ENCODE measurements at regions of chr13 and their contacts with region 1.

Region 1: GRCh38 chr13:49840266-49840665 is 47.8 kb upstream of the KPNA3 start:
- DNase-seq: no peak
- ATAC-seq: no peak
- H3K4me3 Mint-ChIP-seq: no peak overlapping the region
- H3K27ac Mint-ChIP-seq: no peak overlapping the region
- H3K4me1 Mint-ChIP-seq: no peaks in the 10 kb centered on the region
- H3K27me3 Mint-ChIP-seq: no peaks in the 10 kb centered on the region
- CTCF ChIP-seq: no peak

Region 2: DNA sequence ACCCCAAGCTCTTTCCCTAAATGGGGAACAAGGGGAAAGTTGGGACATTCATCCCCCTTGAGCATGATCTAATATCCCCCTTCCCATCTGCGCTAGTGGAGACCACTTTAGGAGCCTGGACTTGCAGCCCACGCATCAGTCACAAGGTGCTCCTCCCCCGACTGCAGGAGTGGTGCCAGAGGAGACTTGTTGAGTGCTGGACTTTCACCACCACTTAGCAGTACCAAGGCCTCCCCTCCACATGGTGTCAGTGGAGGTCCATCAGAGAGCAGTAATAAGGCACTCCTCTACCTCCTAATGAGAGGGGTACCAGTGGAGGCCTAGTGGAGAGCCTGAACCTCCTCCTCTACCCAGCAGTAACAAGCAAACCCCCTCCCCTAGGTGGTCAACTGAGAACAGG is 418.9 kb before region 1 on chr13:
- CTCF ChIA-PET with region 1: no interaction called
- POLR2A ChIA-PET with region 1: no interaction called
- intact Hi-C with region 1: loop called (anchors 5 kb)
- DNase-seq: no peak
- ATAC-seq: peak; percentile 56
- H3K4me3 Mint-ChIP-seq: no peak overlapping the region
- H3K27ac Mint-ChIP-seq: no peak overlapping the region
- H3K4me1 Mint-ChIP-seq: peaks cover 6% of the 10 kb centered on the region
- H3K27me3 Mint-ChIP-seq: no peaks in the 10 kb centered on the region
- CTCF ChIP-seq: no peak

Region 3: DNA sequence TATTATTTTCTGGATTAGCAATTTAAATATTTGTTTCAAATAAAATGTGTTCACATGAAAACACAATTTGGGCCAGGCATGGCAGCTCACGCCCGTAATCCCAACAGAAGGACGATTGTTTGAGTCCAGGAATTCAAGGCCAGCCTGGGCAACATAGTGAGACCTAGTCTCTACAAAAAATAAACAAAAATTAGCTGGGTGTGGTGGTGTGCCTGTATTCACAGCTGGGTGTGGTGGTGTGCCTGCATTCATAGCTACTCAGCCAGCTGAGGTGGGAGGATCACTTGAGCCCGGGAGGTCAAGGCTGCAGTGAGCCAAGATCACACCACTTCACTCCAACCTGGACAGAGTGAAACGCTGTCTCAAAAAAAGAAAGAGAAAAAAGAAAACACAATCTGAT is 94.2 kb before region 1 on chr13:
- CTCF ChIA-PET with region 1: no interaction called
- POLR2A ChIA-PET with region 1: no interaction called
- intact Hi-C with region 1: no loop called
- DNase-seq: no peak
- ATAC-seq: no peak
- H3K4me3 Mint-ChIP-seq: no peak overlapping the region
- H3K27ac Mint-ChIP-seq: no peak overlapping the region
- H3K4me1 Mint-ChIP-seq: peaks cover 14% of the 10 kb centered on the region
- H3K27me3 Mint-ChIP-seq: no peaks in the 10 kb centered on the region
- CTCF ChIP-seq: no peak